HCT116 (cell line): ENCODE measurements at regions of chr3 and their contacts with region 1.

Region 1: GRCh38 chr3:34260271-34261006 is 462.0 kb downstream of the PDCD6IP start:
- DNase-seq: peak; percentile 16
- ATAC-seq: peak; percentile 78
- H3K4me3 ChIP-seq: no peak overlapping the region
- H3K27ac ChIP-seq: no peak overlapping the region
- H3K4me1 ChIP-seq: no peaks in the 10 kb centered on the region
- H3K27me3 ChIP-seq: peaks cover 1% of the 10 kb centered on the region; the same call in 1 of the 2 replicates
- CTCF ChIP-seq: peak; percentile 20 to 61 (median 57); a peak in 4 of 6 replicates
- POLR2A ChIP-seq: no peak
- RAD21 ChIP-seq: peak; percentile 44

Region 2: GRCh38 chr3:33883538-33883950 is 376.9 kb before region 1 on chr3:
- CTCF ChIA-PET with region 1: interaction called, 10 read pairs
- POLR2A ChIA-PET with region 1: no interaction called
- RAD21 ChIA-PET with region 1: interaction called in 1 of 2 experiments, 4 read pairs
- intact Hi-C with region 1: no loop called
- DNase-seq: peak; percentile 23
- ATAC-seq: peak; percentile 55
- H3K4me3 ChIP-seq: no peak overlapping the region
- H3K27ac ChIP-seq: no peak overlapping the region
- H3K4me1 ChIP-seq: no peaks in the 10 kb centered on the region
- H3K27me3 ChIP-seq: peaks cover 11% of the 10 kb centered on the region; the same call in 1 of the 2 replicates
- CTCF ChIP-seq: peak; percentile 57 to 93 (median 59); a peak in 5 of 6 replicates
- POLR2A ChIP-seq: no peak
- RAD21 ChIP-seq: peak; percentile 79

Region 3: GRCh38 chr3:34157491-34157890 is 102.9 kb before region 1 on chr3:
- CTCF ChIA-PET with region 1: no interaction called
- POLR2A ChIA-PET with region 1: no interaction called
- RAD21 ChIA-PET with region 1: no interaction called
- intact Hi-C with region 1: no loop called
- DNase-seq: no peak
- ATAC-seq: no peak
- H3K4me3 ChIP-seq: no peak overlapping the region
- H3K27ac ChIP-seq: no peak overlapping the region
- H3K4me1 ChIP-seq: no peaks in the 10 kb centered on the region
- H3K27me3 ChIP-seq: peaks cover 7% of the 10 kb centered on the region; the same call in 1 of the 2 replicates
- CTCF ChIP-seq: no peak
- POLR2A ChIP-seq: no peak
- RAD21 ChIP-seq: no peak

Region 4: DNA sequence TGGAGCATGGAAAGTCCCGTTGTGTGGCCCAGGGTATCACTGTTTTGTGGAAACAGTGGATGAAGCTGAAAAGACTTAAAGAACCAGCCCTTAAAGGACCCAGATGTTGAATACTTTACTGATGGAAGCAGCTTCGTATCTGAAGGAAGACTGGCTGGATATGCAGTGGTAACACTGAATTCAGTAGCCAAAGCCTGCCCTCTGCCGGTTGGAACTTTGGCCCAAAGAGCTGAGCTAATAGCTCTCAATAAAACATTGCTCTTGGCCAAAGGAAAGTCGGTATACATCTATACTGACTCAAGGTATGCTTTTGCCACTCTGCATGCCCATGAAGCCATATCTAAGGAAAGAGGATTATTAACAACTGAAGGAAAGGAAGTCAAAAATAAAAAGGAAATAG is 423.4 kb after region 1 on chr3:
- CTCF ChIA-PET with region 1: interaction called, 14 read pairs
- POLR2A ChIA-PET with region 1: no interaction called
- RAD21 ChIA-PET with region 1: no interaction called
- intact Hi-C with region 1: no loop called
- DNase-seq: no peak
- ATAC-seq: no peak
- H3K4me3 ChIP-seq: no peak overlapping the region
- H3K27ac ChIP-seq: no peak overlapping the region
- H3K4me1 ChIP-seq: no peaks in the 10 kb centered on the region
- H3K27me3 ChIP-seq: no peaks in the 10 kb centered on the region
- CTCF ChIP-seq: peak in 2 of 3 experiments; percentile 27 to 41; a peak in 3 of 6 replicates
- POLR2A ChIP-seq: no peak
- RAD21 ChIP-seq: peak; percentile 35; the same call in 1 of the 2 replicates

Region 5: DNA sequence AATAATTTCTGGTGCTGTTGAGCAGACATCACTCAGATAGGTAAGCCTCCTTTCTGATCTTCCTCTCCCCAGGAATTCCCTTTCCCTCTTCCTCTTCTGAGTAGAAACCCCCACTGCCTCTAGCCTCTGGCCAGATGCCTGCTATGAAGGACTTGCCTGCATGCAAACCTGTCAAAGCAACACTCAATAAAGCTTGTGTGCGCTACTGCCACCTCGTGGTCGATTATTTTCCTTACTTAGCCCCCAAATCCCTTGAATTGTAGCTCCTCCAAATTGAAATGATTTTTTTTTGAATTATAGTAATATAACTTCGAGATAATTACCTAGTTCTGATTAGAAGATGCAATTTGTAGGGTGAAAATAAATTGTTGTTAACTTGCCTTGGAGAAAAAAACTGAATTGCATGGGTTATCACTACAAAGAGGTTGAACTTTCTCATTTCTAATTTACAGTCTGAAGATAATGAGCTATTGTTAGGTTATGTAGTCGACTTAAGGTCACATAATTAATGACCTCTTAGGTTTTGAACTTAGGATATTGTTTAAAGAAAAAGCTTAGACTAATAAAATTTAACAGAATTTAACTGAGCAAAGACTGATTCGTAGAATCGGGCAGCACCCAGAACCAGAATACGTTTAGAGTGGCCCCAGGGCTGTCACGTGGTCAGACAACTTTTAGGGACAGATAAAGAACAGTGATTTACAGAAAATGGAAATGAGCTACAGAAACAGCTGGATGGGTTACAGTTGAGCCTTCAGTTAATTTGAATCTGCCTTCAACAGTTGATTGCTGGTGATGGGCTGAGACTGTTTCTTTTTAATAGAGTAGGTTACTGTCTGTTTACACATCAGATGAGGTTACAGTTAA is 1648.2 kb after region 1 on chr3:
- CTCF ChIA-PET with region 1: no interaction called
- POLR2A ChIA-PET with region 1: no interaction called
- RAD21 ChIA-PET with region 1: no interaction called
- intact Hi-C with region 1: loop called (anchors 5 kb)
- DNase-seq: peak; percentile 15
- ATAC-seq: no peak
- H3K4me3 ChIP-seq: no peak overlapping the region
- H3K27ac ChIP-seq: no peak overlapping the region
- H3K4me1 ChIP-seq: no peaks in the 10 kb centered on the region
- H3K27me3 ChIP-seq: no peaks in the 10 kb centered on the region
- CTCF ChIP-seq: peak in 2 of 3 experiments; percentile 56 to 63; a peak in 4 of 6 replicates
- POLR2A ChIP-seq: no peak
- RAD21 ChIP-seq: peak; percentile 45